AG04449 (cell line): ENCODE measurements at regions of chr3 and their contacts with region 1.

Region 1: GRCh38 chr3:54954022-54954421 is 26.2 kb upstream of the LRTM1 start:
- DNase-seq: peak; percentile 77
- H3K4me3 ChIP-seq: no peak overlapping the region
- CTCF ChIP-seq: no peak

Region 2: GRCh38 chr3:54965746-54966145 is 11.7 kb after region 1 on chr3:
- CTCF ChIA-PET with region 1: interaction called, 10 read pairs
- POLR2A ChIA-PET with region 1: interaction called, 5 read pairs
- DNase-seq: no peak
- H3K4me3 ChIP-seq: no peak overlapping the region
- CTCF ChIP-seq: no peak